Sciatic nerve (tissue), 2 donors: ENCODE measurements at regions of chr21 and their contacts with region 1.

Region 1: GRCh38 chr21:36504067-36505058 is 24.4 kb upstream of the CLDN14 start:
- DNase-seq: no peak
- ATAC-seq: no peak

Region 2: DNA sequence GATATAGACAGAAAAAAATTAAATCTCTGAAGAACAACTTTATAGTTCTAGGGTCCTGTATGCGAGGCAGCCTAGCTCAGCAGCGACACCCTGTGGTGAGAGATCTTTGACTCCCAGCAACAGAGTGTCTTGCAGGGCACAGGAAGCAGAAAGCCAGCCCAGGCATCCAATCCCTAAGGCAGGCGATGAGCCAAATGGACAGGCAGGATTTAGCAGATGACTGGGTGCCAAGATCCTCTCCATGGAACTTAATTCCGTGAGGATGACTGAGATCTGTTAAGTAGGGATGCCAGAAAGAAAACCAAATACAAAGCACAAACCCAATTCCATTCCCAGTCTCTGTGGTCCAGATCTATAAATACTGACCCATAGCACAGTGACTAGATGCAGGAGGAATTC is 423.4 kb after region 1 on chr21:
- intact Hi-C with region 1: loop called (anchors 5 kb)
- DNase-seq: peak; percentile 92
- ATAC-seq: peak; percentile 84

Region 3: GRCh38 chr21:37017951-37018679 is 513.8 kb after region 1 on chr21:
- intact Hi-C with region 1: no loop called
- DNase-seq: no peak
- ATAC-seq: no peak